Naive thymus-derived CD8-positive, alpha-beta T cell (primary cell): ENCODE measurements at regions of chr20 and their contacts with region 1.

Region 1: DNA sequence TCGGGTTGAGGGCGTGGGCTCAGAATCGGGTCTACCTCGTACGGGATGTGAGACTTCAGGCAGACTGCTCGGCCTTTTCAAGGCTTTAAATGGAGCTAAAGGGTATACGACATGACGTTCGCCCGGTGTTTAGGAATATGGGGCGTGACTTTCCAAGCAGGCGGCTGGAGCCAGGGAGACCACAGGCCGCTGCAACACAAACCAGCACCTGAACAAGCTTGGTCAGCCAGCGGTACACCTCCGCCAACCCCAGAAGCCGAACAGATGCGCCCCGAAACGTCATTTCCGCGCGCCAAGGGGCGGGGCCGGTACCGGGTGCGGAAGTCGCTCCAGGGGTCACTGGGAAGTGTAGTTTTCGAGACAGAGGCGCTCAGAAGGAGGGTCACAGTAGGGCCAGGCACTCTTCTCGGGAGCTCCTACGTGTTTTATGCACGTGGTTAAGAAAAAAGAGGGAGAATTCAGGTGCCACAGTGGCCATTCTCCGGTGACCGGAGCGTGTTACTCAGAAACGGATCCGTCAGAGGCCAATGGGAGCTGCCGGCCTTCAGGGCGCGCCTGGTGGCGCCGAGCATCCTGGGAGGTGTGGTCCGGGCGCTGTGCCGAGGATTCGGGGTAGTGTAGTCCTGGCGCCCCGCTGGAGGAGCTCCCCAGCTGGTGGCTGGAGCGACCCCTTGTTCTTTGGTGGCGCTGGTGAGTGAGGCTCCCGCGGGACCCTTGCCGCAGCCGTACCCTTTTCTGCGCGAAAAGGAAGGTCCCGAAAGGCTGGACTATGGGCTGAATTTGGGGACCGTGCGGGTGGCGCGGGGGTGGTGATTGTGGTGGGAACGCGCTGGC is at the start of gene ZNF133:
- DNase-seq: peak; percentile 91 to 100 (median 96)
- ATAC-seq: peak; percentile 93 to 95
- H3K4me3 Mint-ChIP-seq: peak within 1 kb of the TSS; percentile 93 to 99 (median 98)
- H3K27ac Mint-ChIP-seq: peak within 1 kb of the TSS; percentile 97 to 100 (median 100)
- H3K4me1 Mint-ChIP-seq: peaks cover 28 to 62% (median 33%) of the 10 kb centered on the region in 4 donors
- H3K27me3 Mint-ChIP-seq: peaks cover 10 to 28% (median 19%) of the 10 kb centered on the region in 5 donors
- polyA plus RNA-seq, gene ZNF133: 4.3 to 6.8 (median 6.7) TPM

Region 2: GRCh38 chr20:17968366-17969279 is 319.5 kb before region 1 on chr20 and contains the starts of genes MGME1 and SNX5:
- POLR2A ChIA-PET with region 1: interaction called, 13 read pairs
- DNase-seq: peak; percentile 92 to 100 (median 98)
- ATAC-seq: peak; percentile 90 to 93
- H3K4me3 Mint-ChIP-seq: peak within 1 kb of the TSS; percentile 86 to 97 (median 94)
- H3K27ac Mint-ChIP-seq: peak within 1 kb of the TSS; percentile 93 to 99 (median 98)
- H3K4me1 Mint-ChIP-seq: peaks cover 30 to 82% (median 75%) of the 10 kb centered on the region in 4 donors
- H3K27me3 Mint-ChIP-seq: no peaks in the 10 kb centered on the region
- polyA plus RNA-seq, gene MGME1: 1.1 to 5.1 (median 2.1) TPM
- polyA plus RNA-seq, gene SNX5: 38.8 to 58.6 (median 44.4) TPM

Region 3: GRCh38 chr20:18137412-18138265 is 150.5 kb before region 1 on chr20 and contains the starts of genes KAT14 and PET117:
- POLR2A ChIA-PET with region 1: interaction called, 44 read pairs
- DNase-seq: peak; percentile 80 to 96 (median 93)
- ATAC-seq: peak; percentile 91 to 92
- H3K4me3 Mint-ChIP-seq: peak within 1 kb of the TSS; percentile 69 to 95 (median 90)
- H3K27ac Mint-ChIP-seq: peak within 1 kb of the TSS; percentile 66 to 99 (median 94)
- H3K4me1 Mint-ChIP-seq: peaks cover 21 to 42% (median 31%) of the 10 kb centered on the region in 4 donors
- H3K27me3 Mint-ChIP-seq: no peaks in the 10 kb centered on the region
- polyA plus RNA-seq, gene KAT14: 20.3 to 24.7 (median 24.2) TPM
- polyA plus RNA-seq, gene PET117: 32.4 to 41.4 (median 36.2) TPM

Region 4: GRCh38 chr20:18466894-18467730 is 179.0 kb after region 1 on chr20 and contains the starts of genes DZANK1 and POLR3F:
- POLR2A ChIA-PET with region 1: interaction called, 21 read pairs
- DNase-seq: peak; percentile 85 to 96 (median 90)
- ATAC-seq: peak; percentile 92 to 96
- H3K4me3 Mint-ChIP-seq: peak within 1 kb of the TSS; percentile 90 to 100 (median 97)
- H3K27ac Mint-ChIP-seq: peak within 1 kb of the TSS; percentile 95 to 99 (median 97)
- H3K4me1 Mint-ChIP-seq: peaks cover 8 to 34% (median 28%) of the 10 kb centered on the region in 4 donors
- H3K27me3 Mint-ChIP-seq: no peaks in the 10 kb centered on the region
- polyA plus RNA-seq, gene DZANK1: 0.74 to 1.3 (median 0.87) TPM
- polyA plus RNA-seq, gene POLR3F: 5.2 to 9.3 (median 7.6) TPM